Activated B cell treated with CpG ODN at 0.5 μM for 24 hours (primary cell): ENCODE measurements at regions of chr16 and their contacts with region 1.

Region 1: DNA sequence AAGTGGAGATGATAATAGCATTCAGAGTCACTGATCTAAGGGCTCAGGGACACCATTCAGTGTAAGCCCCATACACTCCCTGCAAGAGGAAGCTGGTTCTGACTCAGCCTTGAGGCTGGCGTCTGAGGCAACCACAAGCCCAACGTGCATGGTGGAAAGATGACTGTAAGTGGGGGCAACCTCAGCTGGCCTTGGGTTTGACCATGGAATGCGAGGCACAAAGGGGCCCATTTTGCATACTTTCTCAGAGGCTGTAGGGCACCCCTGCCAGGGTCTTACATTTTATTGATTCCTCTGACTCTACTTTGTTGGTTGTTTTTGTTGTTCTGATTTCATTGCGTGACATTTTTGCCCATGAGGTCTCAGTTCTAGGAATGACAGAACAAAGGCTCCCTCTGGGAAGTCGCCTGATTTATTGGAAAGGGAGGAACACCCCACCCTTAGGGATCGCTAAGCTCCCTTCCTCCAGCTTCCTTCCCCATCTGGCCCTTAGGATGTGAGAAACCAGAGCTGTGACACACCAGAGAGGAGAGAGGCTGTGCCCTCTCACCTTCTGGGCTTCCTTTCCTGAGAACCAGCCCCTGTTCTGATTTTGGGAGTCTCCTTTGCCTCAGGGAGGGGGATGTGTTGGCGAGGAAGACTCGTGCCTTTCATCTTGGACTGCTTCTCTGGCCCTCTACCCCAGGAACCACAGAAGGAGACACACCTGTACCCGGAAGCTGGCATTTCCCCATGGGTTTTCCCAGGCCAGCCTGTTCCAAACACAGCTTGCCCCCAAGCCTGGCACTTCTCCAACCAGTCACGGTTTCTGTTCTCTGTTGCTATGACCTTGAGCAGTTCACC is 5.6 kb upstream of the CIITA start:
- DNase-seq: peak; percentile 56
- ATAC-seq: peak; percentile 51
- H3K4me3 Mint-ChIP-seq: peak overlapping the region; percentile 70
- H3K27ac Mint-ChIP-seq: peak overlapping the region; percentile 91
- H3K4me1 Mint-ChIP-seq: peaks cover 99% of the 10 kb centered on the region
- H3K27me3 Mint-ChIP-seq: no peaks in the 10 kb centered on the region
- CTCF ChIP-seq: no peak

Region 2: DNA sequence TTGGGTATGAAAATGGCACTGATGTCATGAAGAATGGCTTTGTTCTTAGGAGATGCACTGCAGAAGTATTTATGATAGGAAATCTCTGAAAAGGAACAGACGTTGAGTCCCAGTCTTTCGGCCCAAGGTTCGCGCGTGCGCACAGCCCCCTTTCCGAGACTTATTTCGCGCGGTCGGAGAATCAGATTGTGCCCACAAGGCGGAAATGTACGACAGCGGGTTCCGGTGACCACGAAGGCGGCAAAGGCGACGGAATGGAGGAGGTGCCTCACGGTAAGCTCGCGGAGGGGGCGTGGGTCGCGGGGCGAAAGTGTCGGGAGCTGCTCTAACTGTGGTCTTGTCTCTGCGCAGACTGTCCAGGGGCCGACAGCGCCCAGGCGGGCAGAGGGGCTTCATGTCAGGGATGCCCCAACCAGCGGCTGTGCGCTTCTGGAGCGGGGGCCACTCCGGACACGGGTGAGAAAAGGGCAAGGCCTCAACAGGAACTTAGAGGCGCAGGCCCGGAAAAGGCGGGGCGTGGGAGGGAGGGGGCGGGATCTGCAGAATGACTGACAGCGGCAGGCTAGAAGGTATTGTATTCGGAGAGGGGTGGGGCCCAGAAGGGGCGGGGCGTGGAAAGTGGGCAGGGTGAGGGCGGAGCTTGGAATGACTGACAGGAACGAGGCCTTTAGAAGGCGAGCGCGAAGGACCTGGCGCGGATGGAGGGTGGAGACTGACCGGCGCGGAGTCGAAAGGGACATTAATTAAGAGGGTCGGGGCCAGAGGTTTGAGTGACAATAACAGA is 127.6 kb before region 1 on chr16 and contains the start of gene NUBP1:
- CTCF ChIA-PET with region 1: interaction called, 19 read pairs
- POLR2A ChIA-PET with region 1: interaction called, 88 read pairs
- intact Hi-C with region 1: loop called (anchors 1 kb)
- DNase-seq: peak; percentile 98
- ATAC-seq: peak; percentile 94
- H3K4me3 Mint-ChIP-seq: peak within 1 kb of the TSS; percentile 94
- H3K27ac Mint-ChIP-seq: peak within 1 kb of the TSS; percentile 99
- H3K4me1 Mint-ChIP-seq: peaks cover 69% of the 10 kb centered on the region
- H3K27me3 Mint-ChIP-seq: no peaks in the 10 kb centered on the region
- CTCF ChIP-seq: no peak
- total RNA-seq, gene NUBP1: 74.1 and 77.2 TPM in 2 replicates

Region 3: GRCh38 chr16:10776280-10776679 is 95.1 kb before region 1 on chr16:
- CTCF ChIA-PET with region 1: no interaction called
- POLR2A ChIA-PET with region 1: interaction called, 12 read pairs
- intact Hi-C with region 1: no loop called
- DNase-seq: no peak
- ATAC-seq: peak; percentile 26
- H3K4me3 Mint-ChIP-seq: no peak overlapping the region
- H3K27ac Mint-ChIP-seq: peak overlapping the region; percentile 9
- H3K4me1 Mint-ChIP-seq: peaks cover 41% of the 10 kb centered on the region
- H3K27me3 Mint-ChIP-seq: no peaks in the 10 kb centered on the region
- CTCF ChIP-seq: no peak

Region 4: GRCh38 chr16:10820546-10820945 is 50.8 kb before region 1 on chr16:
- CTCF ChIA-PET with region 1: interaction called, 3 read pairs
- POLR2A ChIA-PET with region 1: interaction called, 23 read pairs
- intact Hi-C with region 1: no loop called
- DNase-seq: no peak
- ATAC-seq: no peak
- H3K4me3 Mint-ChIP-seq: peak overlapping the region; percentile 24
- H3K27ac Mint-ChIP-seq: peak overlapping the region; percentile 78
- H3K4me1 Mint-ChIP-seq: peaks cover 23% of the 10 kb centered on the region
- H3K27me3 Mint-ChIP-seq: no peaks in the 10 kb centered on the region
- CTCF ChIP-seq: no peak

Region 5: DNA sequence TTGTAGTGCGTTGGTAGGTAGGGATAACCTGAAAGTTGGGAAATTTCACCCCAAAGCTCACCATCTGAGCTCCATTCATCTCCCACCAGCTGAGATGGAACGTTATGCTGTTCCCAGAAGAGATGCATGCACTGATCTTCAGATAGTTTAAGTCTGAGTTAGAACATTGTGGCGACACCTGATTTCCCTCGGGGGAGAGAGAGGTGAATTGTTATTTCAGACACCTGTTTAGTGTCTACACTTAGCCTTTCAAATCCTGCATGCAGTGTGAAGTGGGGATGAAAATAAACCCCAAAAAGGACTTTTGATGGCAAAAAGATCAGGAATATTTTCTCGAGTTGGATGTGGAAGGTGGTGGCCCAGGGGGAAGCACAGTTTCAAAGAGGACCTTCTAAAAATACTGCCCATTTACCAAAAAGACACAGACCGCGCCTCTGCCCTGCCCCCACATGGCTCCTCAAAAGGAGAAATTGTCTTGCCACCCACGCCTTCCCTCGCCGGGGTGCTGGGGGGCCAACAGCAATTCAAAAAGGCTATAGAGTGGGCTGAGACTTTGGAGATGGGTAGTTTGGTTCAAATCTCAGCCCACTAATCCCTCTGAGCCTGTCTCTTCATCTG is 17.1 kb after region 1 on chr16:
- CTCF ChIA-PET with region 1: interaction called, 76 read pairs
- POLR2A ChIA-PET with region 1: interaction called, 318 read pairs
- intact Hi-C with region 1: loop called (anchors 1 kb)
- DNase-seq: no peak
- ATAC-seq: peak; percentile 6
- H3K4me3 Mint-ChIP-seq: peak overlapping the region; percentile 82
- H3K27ac Mint-ChIP-seq: peak overlapping the region; percentile 87
- H3K4me1 Mint-ChIP-seq: peaks cover 99% of the 10 kb centered on the region
- H3K27me3 Mint-ChIP-seq: no peaks in the 10 kb centered on the region
- CTCF ChIP-seq: no peak

Region 6: DNA sequence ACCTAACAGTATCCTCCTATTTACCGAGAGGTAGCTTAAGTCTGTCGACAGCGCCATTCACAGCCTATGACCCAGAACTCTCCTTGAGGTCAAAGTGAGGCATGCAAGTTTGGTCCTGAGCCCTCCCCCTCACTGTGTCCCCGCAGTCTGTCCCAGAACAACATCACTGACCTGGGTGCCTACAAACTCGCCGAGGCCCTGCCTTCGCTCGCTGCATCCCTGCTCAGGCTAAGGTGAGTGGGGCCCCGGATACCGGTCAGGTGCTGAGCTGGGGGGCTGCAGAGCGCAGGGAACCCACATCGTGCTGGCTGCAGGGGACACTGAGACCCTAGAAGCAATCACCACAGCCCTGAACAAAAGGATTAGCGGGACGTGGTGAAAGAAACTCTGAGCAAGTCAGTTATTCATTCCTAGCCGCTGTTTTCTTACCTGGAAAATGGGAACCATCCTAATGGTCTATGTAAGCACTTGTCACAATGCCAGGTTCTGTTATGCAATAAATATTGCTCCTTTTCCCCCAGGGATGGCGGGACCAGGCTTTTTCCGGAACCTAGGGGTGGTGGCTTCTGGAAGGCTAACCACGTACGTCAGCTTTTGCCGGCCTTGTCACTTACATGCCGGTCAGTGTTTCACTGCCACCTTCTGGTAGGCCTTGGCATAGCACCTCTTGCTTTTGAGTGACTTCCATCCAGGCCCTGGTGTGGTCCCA is 47.1 kb after region 1 on chr16:
- CTCF ChIA-PET with region 1: interaction called, 43 read pairs
- POLR2A ChIA-PET with region 1: interaction called, 234 read pairs
- intact Hi-C with region 1: loop called (anchors 1 kb)
- DNase-seq: peak; percentile 80
- ATAC-seq: peak; percentile 78
- H3K4me3 Mint-ChIP-seq: peak overlapping the region; percentile 46
- H3K27ac Mint-ChIP-seq: peak overlapping the region; percentile 88
- H3K4me1 Mint-ChIP-seq: peaks cover 72% of the 10 kb centered on the region
- H3K27me3 Mint-ChIP-seq: no peaks in the 10 kb centered on the region
- CTCF ChIP-seq: no peak

Region 7: GRCh38 chr16:10961231-10961630 is 89.9 kb after region 1 on chr16:
- CTCF ChIA-PET with region 1: no interaction called
- POLR2A ChIA-PET with region 1: no interaction called
- intact Hi-C with region 1: no loop called
- DNase-seq: no peak
- ATAC-seq: no peak
- H3K4me3 Mint-ChIP-seq: no peak overlapping the region
- H3K27ac Mint-ChIP-seq: no peak overlapping the region
- H3K4me1 Mint-ChIP-seq: peaks cover 66% of the 10 kb centered on the region
- H3K27me3 Mint-ChIP-seq: no peaks in the 10 kb centered on the region
- CTCF ChIP-seq: no peak

Region 8: GRCh38 chr16:11079652-11080187 is 208.3 kb after region 1 on chr16:
- CTCF ChIA-PET with region 1: no interaction called
- POLR2A ChIA-PET with region 1: no interaction called
- intact Hi-C with region 1: no loop called
- DNase-seq: no peak
- ATAC-seq: peak; percentile 31
- H3K4me3 Mint-ChIP-seq: peak overlapping the region; percentile 77
- H3K27ac Mint-ChIP-seq: peak overlapping the region; percentile 95
- H3K4me1 Mint-ChIP-seq: peaks cover 78% of the 10 kb centered on the region
- H3K27me3 Mint-ChIP-seq: no peaks in the 10 kb centered on the region
- CTCF ChIP-seq: no peak

Region 9: GRCh38 chr16:11354733-11355574 is 483.6 kb after region 1 on chr16:
- CTCF ChIA-PET with region 1: no interaction called
- POLR2A ChIA-PET with region 1: no interaction called
- intact Hi-C with region 1: no loop called
- DNase-seq: peak; percentile 40
- ATAC-seq: peak; percentile 80
- H3K4me3 Mint-ChIP-seq: peak overlapping the region; percentile 71
- H3K27ac Mint-ChIP-seq: peak overlapping the region; percentile 90
- H3K4me1 Mint-ChIP-seq: peaks cover 61% of the 10 kb centered on the region
- H3K27me3 Mint-ChIP-seq: peaks cover 6% of the 10 kb centered on the region
- CTCF ChIP-seq: no peak

Region 10: DNA sequence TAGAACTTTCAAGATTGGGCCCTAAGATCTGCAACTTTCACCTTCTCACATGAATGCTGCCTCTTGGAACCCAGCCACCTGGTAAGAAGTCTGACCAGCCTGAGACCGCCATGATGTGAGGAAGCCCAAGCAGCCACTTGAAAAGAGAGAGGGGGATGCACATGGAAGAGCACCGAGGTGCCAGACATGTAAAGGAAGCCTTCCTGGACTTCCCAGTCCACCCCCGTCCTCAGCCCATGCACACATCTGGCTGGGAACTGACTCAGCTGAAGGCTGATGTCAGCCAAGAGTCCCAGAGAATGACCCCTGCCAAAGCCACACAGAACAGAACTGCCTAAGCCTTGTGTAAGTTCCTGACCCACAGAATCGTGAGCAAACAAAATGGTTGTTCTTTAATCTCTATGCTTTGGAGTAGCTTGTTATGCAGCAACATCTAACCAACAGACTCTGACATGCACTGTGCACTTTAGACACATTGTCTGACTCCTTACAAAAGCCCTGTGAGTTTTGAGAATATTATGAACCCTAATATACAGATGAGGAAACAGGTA is 560.6 kb after region 1 on chr16:
- CTCF ChIA-PET with region 1: no interaction called
- POLR2A ChIA-PET with region 1: no interaction called
- intact Hi-C with region 1: no loop called
- DNase-seq: no peak
- ATAC-seq: no peak
- H3K4me3 Mint-ChIP-seq: no peak overlapping the region
- H3K27ac Mint-ChIP-seq: no peak overlapping the region
- H3K4me1 Mint-ChIP-seq: no peaks in the 10 kb centered on the region
- H3K27me3 Mint-ChIP-seq: peaks cover 3% of the 10 kb centered on the region
- CTCF ChIP-seq: no peak